ENCODE measurements at regions of chr15 and their contacts with region 1.

Region 1: DNA sequence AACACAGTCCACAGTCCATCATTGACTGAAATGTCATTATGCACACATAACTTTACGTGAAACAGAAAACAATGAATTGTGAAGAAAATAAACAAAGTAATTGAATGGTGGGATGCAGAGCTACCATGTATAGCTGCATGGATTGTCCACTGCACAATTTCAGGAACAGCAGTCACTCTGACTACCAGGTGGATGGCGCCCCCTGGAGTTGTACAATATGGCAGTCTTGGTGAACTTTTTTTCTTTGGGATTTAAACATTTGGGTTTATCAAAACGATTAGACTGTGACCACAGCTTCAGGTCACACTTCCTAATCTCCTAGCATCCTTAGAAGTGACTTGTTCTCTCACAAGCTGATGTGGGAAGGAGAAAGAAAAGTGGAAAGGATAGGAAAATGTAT is 48.9 kb upstream of the TCF12 start:
- DNase-seq: no peak
- H3K4me3 ChIP-seq: no peak overlapping the region
- H3K27ac ChIP-seq: no peak overlapping the region
- H3K4me1 ChIP-seq: no peaks in the 10 kb centered on the region
- H3K27me3 ChIP-seq: no peaks in the 10 kb centered on the region
- CTCF ChIP-seq: peak; percentile 19 to 43 (median 34)
- POLR2A ChIP-seq: no peak

Region 2: DNA sequence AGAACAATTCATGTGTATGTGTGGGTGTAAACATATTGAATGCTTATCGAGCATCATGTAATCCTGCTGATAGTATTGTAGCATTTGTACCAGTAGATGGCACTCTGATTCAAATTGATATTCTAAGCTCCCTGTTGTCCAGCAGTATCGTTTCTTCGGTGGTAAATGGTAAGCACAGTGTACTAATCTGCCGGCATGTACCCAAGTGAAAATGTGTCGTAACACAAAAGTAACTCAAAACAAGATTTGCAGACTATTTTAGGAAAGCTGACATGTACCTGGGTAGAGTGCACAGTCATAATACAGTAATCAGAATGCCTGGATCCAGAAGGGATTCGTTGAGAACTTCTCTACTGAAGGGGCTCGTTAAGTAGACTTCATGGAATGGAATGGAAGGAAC is 372.9 kb before region 1 on chr15:
- intact Hi-C with region 1: loop called (anchors 5 kb)
- DNase-seq: peak; percentile 17
- H3K4me3 ChIP-seq: no peak overlapping the region
- H3K27ac ChIP-seq: no peak overlapping the region
- H3K4me1 ChIP-seq: no peaks in the 10 kb centered on the region
- H3K27me3 ChIP-seq: no peaks in the 10 kb centered on the region
- CTCF ChIP-seq: peak in 3 of 4 experiments; percentile 50 to 68 (median 66)
- POLR2A ChIP-seq: no peak